ENCODE measurements at regions of chr19 and their contacts with region 1.

Region 1: GRCh38 chr19:40553885-40554857 is 22.5 kb upstream of the SHKBP1 start:
- DNase-seq: no peak
- ATAC-seq: no peak
- H3K4me3 ChIP-seq: no peak overlapping the region
- H3K27ac ChIP-seq: no peak overlapping the region
- H3K4me1 ChIP-seq: no peaks in the 10 kb centered on the region; the same call in 1 of the 2 replicates
- H3K27me3 ChIP-seq: no peaks in the 10 kb centered on the region
- CTCF ChIP-seq: no peak

Region 2: DNA sequence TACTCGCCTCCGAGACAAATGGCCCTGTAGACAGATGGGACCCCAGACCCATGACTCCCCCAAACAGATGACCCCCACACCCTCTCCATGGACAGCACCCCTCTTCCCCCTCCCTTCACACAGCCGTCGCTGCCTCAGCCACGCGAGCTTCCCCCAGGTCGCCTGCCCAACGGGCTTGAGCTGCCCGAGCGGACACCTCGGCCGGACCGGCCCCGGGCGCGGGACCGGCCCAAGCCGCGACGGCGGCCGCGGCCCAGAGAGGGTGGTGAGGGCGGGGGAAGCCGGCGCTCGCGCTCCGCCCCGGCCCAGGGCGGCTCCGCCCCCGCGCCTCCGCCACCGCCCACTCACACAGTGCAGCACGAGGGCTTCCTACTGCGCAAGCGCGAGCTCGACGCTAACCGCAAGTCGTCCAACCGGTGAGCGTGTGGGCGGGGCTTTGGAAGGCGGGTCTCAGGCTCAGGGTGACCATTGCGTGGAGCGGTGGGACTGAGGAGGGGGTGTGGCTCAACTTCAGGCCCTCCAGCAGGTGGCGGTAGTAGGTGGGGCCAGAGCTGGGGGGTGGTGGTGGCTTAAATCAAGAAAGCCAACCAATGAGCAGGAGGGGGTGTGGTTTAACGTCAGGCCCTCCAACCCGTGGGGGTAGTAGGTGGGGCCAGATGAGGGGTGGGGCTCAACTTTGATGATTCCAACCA is 16.3 kb after region 1 on chr19:
- CTCF ChIA-PET with region 1: interaction called, 12 read pairs
- POLR2A ChIA-PET with region 1: no interaction called
- in situ Hi-C with region 1: no loop called
- intact Hi-C with region 1: no loop called
- DNase-seq: peak; percentile 88
- ATAC-seq: peak; percentile 95
- H3K4me3 ChIP-seq: peak overlapping the region; percentile 53 to 61
- H3K27ac ChIP-seq: peak overlapping the region; percentile 63; the same call in 1 of the 2 replicates
- H3K4me1 ChIP-seq: peaks cover 5% of the 10 kb centered on the region; the same call in 1 of the 2 replicates
- H3K27me3 ChIP-seq: no peaks in the 10 kb centered on the region
- CTCF ChIP-seq: no peak

Region 3: GRCh38 chr19:40603389-40604135 is 49.4 kb after region 1 on chr19:
- CTCF ChIA-PET with region 1: interaction called, 15 read pairs
- POLR2A ChIA-PET with region 1: no interaction called
- in situ Hi-C with region 1: no loop called
- intact Hi-C with region 1: loop called (anchors 5 kb)
- DNase-seq: peak; percentile 84
- ATAC-seq: peak; percentile 78
- H3K4me3 ChIP-seq: peak overlapping the region; percentile 45 to 62
- H3K27ac ChIP-seq: peak overlapping the region; percentile 34; the same call in 1 of the 2 replicates
- H3K4me1 ChIP-seq: peaks cover 15% of the 10 kb centered on the region
- H3K27me3 ChIP-seq: no peaks in the 10 kb centered on the region
- CTCF ChIP-seq: no peak

Region 4: GRCh38 chr19:40674291-40674690 is 120.1 kb after region 1 on chr19:
- CTCF ChIA-PET with region 1: no interaction called
- POLR2A ChIA-PET with region 1: no interaction called
- in situ Hi-C with region 1: no loop called
- intact Hi-C with region 1: no loop called
- DNase-seq: no peak
- ATAC-seq: no peak
- H3K4me3 ChIP-seq: no peak overlapping the region
- H3K27ac ChIP-seq: no peak overlapping the region
- H3K4me1 ChIP-seq: no peaks in the 10 kb centered on the region
- H3K27me3 ChIP-seq: no peaks in the 10 kb centered on the region
- CTCF ChIP-seq: no peak

Region 5: GRCh38 chr19:41296433-41296871 is 742.3 kb after region 1 on chr19:
- CTCF ChIA-PET with region 1: no interaction called
- POLR2A ChIA-PET with region 1: interaction called, 17 read pairs
- in situ Hi-C with region 1: no loop called
- intact Hi-C with region 1: no loop called
- DNase-seq: no peak
- ATAC-seq: no peak
- H3K4me3 ChIP-seq: no peak overlapping the region
- H3K27ac ChIP-seq: no peak overlapping the region
- H3K4me1 ChIP-seq: no peaks in the 10 kb centered on the region
- H3K27me3 ChIP-seq: no peaks in the 10 kb centered on the region
- CTCF ChIP-seq: no peak

Measured in Panc1 (cell line).